Activated CD8-positive, alpha-beta T cell treated with anti-CD3 and anti-CD28 coated beads, Interleukin-2, amount 10 ng/mL, durations not matched to agents 7 days and 5 days (primary cell): ENCODE measurements at regions of chr1 and their contacts with region 1.

Region 1: GRCh38 chr1:111747282-111747734 is 8.1 kb upstream of the INKA2 start:
- DNase-seq: peak; percentile 89
- ATAC-seq: peak; percentile 91
- H3K4me3 Mint-ChIP-seq: no peak overlapping the region
- H3K27ac Mint-ChIP-seq: no peak overlapping the region
- H3K4me1 Mint-ChIP-seq: peaks cover 25% of the 10 kb centered on the region
- H3K27me3 Mint-ChIP-seq: peaks cover 17% of the 10 kb centered on the region

Region 2: DNA sequence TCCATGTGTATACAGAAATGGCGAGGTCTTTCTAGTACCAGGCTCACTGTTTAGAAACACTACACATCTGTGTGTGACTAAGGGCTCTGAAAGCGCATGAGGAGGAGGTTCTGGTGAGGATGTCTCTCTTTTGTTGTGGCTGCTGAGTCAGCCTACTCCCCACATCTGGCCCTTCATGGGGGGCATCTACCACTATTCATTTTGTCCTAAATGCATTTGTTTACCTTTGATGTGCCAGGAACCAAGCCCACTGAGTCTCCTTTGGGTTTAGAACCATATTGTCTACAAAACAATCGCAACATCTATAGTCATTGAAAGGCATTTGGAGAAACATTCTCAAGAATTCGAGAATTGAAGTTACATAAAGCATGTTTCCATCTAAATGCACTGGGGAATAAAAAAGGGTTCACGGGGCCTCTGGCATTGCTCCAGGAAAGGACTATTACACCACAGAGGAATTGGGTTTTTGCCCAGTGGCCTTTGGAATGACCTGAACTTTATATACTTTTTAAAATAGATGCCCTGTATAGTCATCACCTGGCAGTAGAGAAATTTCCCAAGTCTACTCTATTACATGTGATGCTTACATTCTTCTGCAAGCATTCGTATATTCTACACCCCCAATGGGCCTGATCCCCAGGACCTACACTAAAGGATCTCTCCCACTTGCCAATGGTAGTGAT is 208.8 kb before region 1 on chr1:
- CTCF ChIA-PET with region 1: no interaction called
- POLR2A ChIA-PET with region 1: no interaction called
- DNase-seq: no peak
- ATAC-seq: no peak
- H3K4me3 Mint-ChIP-seq: no peak overlapping the region
- H3K27ac Mint-ChIP-seq: no peak overlapping the region
- H3K4me1 Mint-ChIP-seq: peaks cover 5% of the 10 kb centered on the region
- H3K27me3 Mint-ChIP-seq: no peaks in the 10 kb centered on the region

Region 3: GRCh38 chr1:111733183-111733991 is 13.9 kb before region 1 on chr1:
- CTCF ChIA-PET with region 1: interaction called, 31 read pairs
- POLR2A ChIA-PET with region 1: interaction called, 5 read pairs
- DNase-seq: no peak
- ATAC-seq: no peak
- H3K4me3 Mint-ChIP-seq: no peak overlapping the region
- H3K27ac Mint-ChIP-seq: peak overlapping the region; percentile 9
- H3K4me1 Mint-ChIP-seq: peaks cover 14% of the 10 kb centered on the region
- H3K27me3 Mint-ChIP-seq: peaks cover 18% of the 10 kb centered on the region

Region 4: GRCh38 chr1:111769517-111770146 is 22.3 kb after region 1 on chr1:
- CTCF ChIA-PET with region 1: interaction called, 26 read pairs
- POLR2A ChIA-PET with region 1: no interaction called
- DNase-seq: peak; percentile 64
- ATAC-seq: no peak
- H3K4me3 Mint-ChIP-seq: no peak overlapping the region
- H3K27ac Mint-ChIP-seq: no peak overlapping the region
- H3K4me1 Mint-ChIP-seq: no peaks in the 10 kb centered on the region
- H3K27me3 Mint-ChIP-seq: no peaks in the 10 kb centered on the region

Region 5: GRCh38 chr1:112011215-112011614 is 263.9 kb after region 1 on chr1:
- CTCF ChIA-PET with region 1: no interaction called
- POLR2A ChIA-PET with region 1: no interaction called
- DNase-seq: no peak
- ATAC-seq: no peak
- H3K4me3 Mint-ChIP-seq: no peak overlapping the region
- H3K27ac Mint-ChIP-seq: no peak overlapping the region
- H3K4me1 Mint-ChIP-seq: no peaks in the 10 kb centered on the region
- H3K27me3 Mint-ChIP-seq: peaks cover 3% of the 10 kb centered on the region